Heart right ventricle (tissue), 16 donors: ENCODE measurements at regions of chr1 and their contacts with region 1.

Region 1: DNA sequence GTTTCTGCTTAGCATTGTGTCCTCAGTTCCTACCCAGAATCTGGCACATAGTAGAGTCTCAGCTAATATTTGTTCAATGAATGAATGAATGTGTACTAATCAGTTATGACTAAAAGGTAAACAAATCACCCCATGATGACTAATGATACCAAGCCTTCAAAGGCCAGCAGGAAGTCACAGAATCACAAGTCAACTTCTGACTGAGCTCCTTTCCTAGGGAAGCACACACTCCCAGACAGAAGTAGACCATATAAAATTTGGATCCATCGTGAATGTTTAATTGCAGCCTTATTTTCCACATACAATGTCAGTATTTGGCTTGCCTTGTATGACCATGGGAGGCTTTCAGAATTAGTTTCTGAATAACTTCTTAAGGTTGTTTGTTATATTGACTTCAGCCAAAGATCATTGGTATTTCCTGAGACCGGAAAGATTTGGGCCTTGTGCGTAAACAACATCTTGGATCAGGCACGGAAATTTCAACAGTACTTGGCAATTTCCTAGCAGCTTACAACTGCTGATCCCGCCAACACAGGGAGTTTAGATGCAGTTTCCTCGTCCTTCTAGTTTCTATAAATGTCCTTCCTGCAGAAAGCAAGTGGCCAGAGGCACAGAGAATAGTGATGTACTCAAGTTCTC is 185.9 kb upstream of the ATP1B1 start:
- DNase-seq: peak in 1 of 2 donors; percentile 58
- ATAC-seq: peak; percentile 70 to 93 (median 88)
- H3K4me3 ChIP-seq: no peak overlapping the region
- H3K27ac ChIP-seq: peak overlapping the region; percentile 33 to 80 (median 68)
- H3K4me1 ChIP-seq: peaks cover 0 to 46% (median 17%) of the 10 kb centered on the region in 9 donors
- H3K27me3 ChIP-seq: no peaks in the 10 kb centered on the region
- CTCF ChIP-seq: no peak

Region 2: GRCh38 chr1:168853866-168854265 is 66.7 kb before region 1 on chr1:
- intact Hi-C with region 1: no loop called
- DNase-seq: no peak
- ATAC-seq: no peak
- H3K4me3 ChIP-seq: no peak overlapping the region
- H3K27ac ChIP-seq: no peak overlapping the region
- H3K4me1 ChIP-seq: no peaks in the 10 kb centered on the region
- H3K27me3 ChIP-seq: no peaks in the 10 kb centered on the region
- CTCF ChIP-seq: no peak

Region 3: GRCh38 chr1:168972887-168973286 is 52.3 kb after region 1 on chr1:
- intact Hi-C with region 1: loop called in 1 of 10 experiments (anchors 5 kb)
- DNase-seq: no peak
- ATAC-seq: peak in 2 of 8 donors; percentile 29 to 46
- H3K4me3 ChIP-seq: no peak overlapping the region
- H3K27ac ChIP-seq: no peak overlapping the region
- H3K4me1 ChIP-seq: peaks cover 0 to 20% (median 3%) of the 10 kb centered on the region in 9 donors
- H3K27me3 ChIP-seq: no peaks in the 10 kb centered on the region
- CTCF ChIP-seq: no peak